ENCODE measurements at regions of chr12 and their contacts with region 1.

Region 1: GRCh38 chr12:96578526-96579125 is 89.2 kb downstream of the CFAP54 start:
- DNase-seq: no peak
- ATAC-seq: no peak
- H3K4me3 ChIP-seq: no peak overlapping the region
- H3K27ac ChIP-seq: no peak overlapping the region
- H3K4me1 ChIP-seq: no peaks in the 10 kb centered on the region
- H3K27me3 ChIP-seq: no peaks in the 10 kb centered on the region

Region 2: DNA sequence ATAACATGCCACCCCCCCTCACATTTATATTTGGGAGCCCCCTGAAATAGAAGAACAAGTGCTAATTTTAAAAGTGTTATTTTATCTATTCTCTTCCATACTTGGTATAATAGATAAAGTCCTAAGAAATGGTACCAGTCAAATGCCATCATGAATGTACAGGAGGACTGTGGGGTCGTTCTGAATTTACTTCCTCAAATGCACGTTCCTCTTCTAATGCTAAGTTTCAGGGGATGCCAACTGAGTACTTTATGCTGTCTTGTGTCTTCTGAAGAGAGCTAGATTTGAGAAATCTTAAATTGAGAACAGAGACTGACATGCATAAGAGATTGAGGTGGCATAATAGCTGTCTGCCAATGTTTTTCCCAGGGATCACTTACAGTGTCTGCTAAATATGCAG is 30.2 kb before region 1 on chr12:
- intact Hi-C with region 1: no loop called
- DNase-seq: no peak
- ATAC-seq: no peak
- H3K4me3 ChIP-seq: no peak overlapping the region
- H3K27ac ChIP-seq: no peak overlapping the region
- H3K4me1 ChIP-seq: no peaks in the 10 kb centered on the region
- H3K27me3 ChIP-seq: no peaks in the 10 kb centered on the region

Region 3: GRCh38 chr12:97308576-97309198 is 730.1 kb after region 1 on chr12:
- intact Hi-C with region 1: loop called (anchors 5 kb)
- DNase-seq: no peak
- ATAC-seq: no peak
- H3K4me3 ChIP-seq: no peak overlapping the region
- H3K27ac ChIP-seq: no peak overlapping the region
- H3K4me1 ChIP-seq: no peaks in the 10 kb centered on the region
- H3K27me3 ChIP-seq: peaks cover 0 to 1% of the 10 kb centered on the region in 2 donors